Naive thymus-derived CD4-positive, alpha-beta T cell (primary cell): ENCODE measurements at regions of chr4 and their contacts with region 1.

Region 1: DNA sequence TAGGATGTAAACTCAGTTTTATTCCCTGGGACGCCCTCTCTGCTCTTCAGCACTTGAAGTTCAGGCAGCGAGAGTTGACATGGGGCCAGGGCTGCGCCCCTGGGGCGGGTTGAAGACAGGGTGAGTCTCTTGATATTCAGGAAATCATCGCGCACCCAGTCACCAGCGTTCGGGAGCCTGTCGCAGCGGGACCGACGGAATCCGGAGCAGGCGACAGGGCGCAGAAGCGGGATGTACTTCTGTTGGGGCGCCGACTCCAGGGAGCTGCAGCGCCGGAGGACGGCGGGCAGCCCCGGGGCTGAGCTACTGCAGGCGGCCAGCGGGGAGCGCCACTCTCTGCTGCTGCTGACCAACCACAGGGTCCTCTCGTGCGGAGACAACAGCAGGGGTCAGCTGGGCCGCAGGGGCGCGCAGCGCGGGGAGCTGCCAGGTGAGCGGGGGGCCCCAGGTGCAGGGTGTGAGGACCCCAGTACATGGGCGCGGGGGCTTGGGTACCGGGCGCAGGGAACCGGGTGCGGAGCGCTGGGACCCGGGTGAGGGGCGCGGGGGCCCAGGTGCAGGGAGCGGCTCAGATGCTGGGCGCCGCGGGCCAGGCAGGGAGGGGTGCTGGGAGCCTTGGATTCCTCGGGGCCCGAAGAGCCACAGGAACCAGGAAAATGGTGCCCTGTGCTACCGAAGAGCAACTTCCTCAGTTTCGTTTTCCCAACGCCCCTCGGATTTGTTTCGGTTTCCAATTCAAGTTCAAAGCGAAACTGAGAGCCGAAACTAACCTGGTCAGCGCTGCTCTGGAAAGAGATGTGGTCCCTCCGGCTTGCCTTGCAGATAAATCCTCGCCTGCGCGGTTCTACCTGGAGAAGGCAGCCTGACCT is at the start of gene HERC6:
- DNase-seq: peak; percentile 49 to 77 (median 70)
- ATAC-seq: peak; percentile 80
- H3K4me3 ChIP-seq: peak within 1 kb of the TSS; percentile 95
- H3K4me3 Mint-ChIP-seq: peak within 1 kb of the TSS; percentile 88 to 98 (median 94)
- H3K27ac ChIP-seq: peak within 1 kb of the TSS; percentile 92
- H3K27ac Mint-ChIP-seq: peak within 1 kb of the TSS; percentile 91 to 99 (median 94)
- H3K4me1 ChIP-seq: peaks cover 21 to 27% of the 10 kb centered on the region in 2 donors
- H3K4me1 Mint-ChIP-seq: peaks cover 24 to 60% (median 46%) of the 10 kb centered on the region in 7 donors
- H3K27me3 ChIP-seq: no peaks in the 10 kb centered on the region
- H3K27me3 Mint-ChIP-seq: no peaks in the 10 kb centered on the region
- total RNA-seq, gene HERC6: 12.6 to 43.5 (median 23.0) TPM

Region 2: GRCh38 chr4:87390891-87391575 is 987.9 kb before region 1 on chr4 and contains the start of gene HSD17B11:
- CTCF ChIA-PET with region 1: no interaction called
- POLR2A ChIA-PET with region 1: interaction called, 3 read pairs
- intact Hi-C with region 1: loop called in 1 of 2 experiments (anchors 10 kb)
- DNase-seq: peak; percentile 44 to 83 (median 79)
- ATAC-seq: peak; percentile 99
- H3K4me3 ChIP-seq: peak within 1 kb of the TSS; percentile 85
- H3K4me3 Mint-ChIP-seq: peak within 1 kb of the TSS; percentile 87 to 99 (median 97)
- H3K27ac ChIP-seq: peak within 1 kb of the TSS; percentile 82
- H3K27ac Mint-ChIP-seq: peak within 1 kb of the TSS; percentile 83 to 96 (median 94)
- H3K4me1 ChIP-seq: peaks cover 10 to 17% of the 10 kb centered on the region in 2 donors
- H3K4me1 Mint-ChIP-seq: peaks cover 32 to 66% (median 57%) of the 10 kb centered on the region in 7 donors
- H3K27me3 ChIP-seq: no peaks in the 10 kb centered on the region
- H3K27me3 Mint-ChIP-seq: peaks cover 0 to 14% (median 0%) of the 10 kb centered on the region in 5 donors
- total RNA-seq, gene HSD17B11: 34.3 to 74.4 (median 61.0) TPM

Region 3: GRCh38 chr4:88007304-88008121 is 371.4 kb before region 1 on chr4 and contains the start of gene PKD2:
- CTCF ChIA-PET with region 1: no interaction called
- POLR2A ChIA-PET with region 1: no interaction called
- intact Hi-C with region 1: loop called (anchors 5 to 10 kb)
- DNase-seq: peak; percentile 10 to 89 (median 54)
- ATAC-seq: peak; percentile 92
- H3K4me3 ChIP-seq: peak within 1 kb of the TSS; percentile 61
- H3K4me3 Mint-ChIP-seq: peak within 1 kb of the TSS; percentile 81 to 98 (median 94)
- H3K27ac ChIP-seq: peak within 1 kb of the TSS; percentile 56
- H3K27ac Mint-ChIP-seq: peak within 1 kb of the TSS; percentile 2 to 90 (median 58)
- H3K4me1 ChIP-seq: peaks cover 6 to 7% of the 10 kb centered on the region in 2 donors
- H3K4me1 Mint-ChIP-seq: peaks cover 19 to 42% (median 37%) of the 10 kb centered on the region in 7 donors
- H3K27me3 ChIP-seq: no peaks in the 10 kb centered on the region
- H3K27me3 Mint-ChIP-seq: peaks cover 0 to 31% (median 3%) of the 10 kb centered on the region in 5 donors
- total RNA-seq, gene PKD2: 4.9 to 16.1 (median 6.8) TPM

Region 4: DNA sequence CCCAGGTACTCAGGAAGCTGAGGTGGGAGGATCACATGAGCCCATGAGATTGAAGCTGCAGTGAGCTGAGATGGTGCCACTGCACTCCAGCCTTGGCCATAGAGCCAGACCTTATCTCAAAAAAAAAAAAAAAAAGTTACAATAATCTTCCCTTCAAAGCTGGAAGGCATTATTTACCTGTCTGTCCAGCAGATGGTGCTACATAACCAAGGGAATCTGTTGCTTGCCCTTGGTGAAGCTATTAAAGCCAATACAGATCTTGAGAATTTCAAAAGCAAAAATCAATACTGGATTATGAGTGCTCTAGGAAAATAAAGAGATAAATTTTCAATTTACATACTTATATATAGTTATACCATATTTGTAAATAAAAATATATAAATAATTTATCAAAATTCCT is 345.6 kb before region 1 on chr4:
- CTCF ChIA-PET with region 1: no interaction called
- POLR2A ChIA-PET with region 1: no interaction called
- intact Hi-C with region 1: loop called in 1 of 2 experiments (anchors 10 kb)
- DNase-seq: peak in 7 of 9 donors; percentile 19 to 57 (median 32)
- ATAC-seq: peak; percentile 75
- H3K4me3 ChIP-seq: no peak overlapping the region
- H3K4me3 Mint-ChIP-seq: no peak overlapping the region
- H3K27ac ChIP-seq: no peak overlapping the region
- H3K27ac Mint-ChIP-seq: no peak overlapping the region
- H3K4me1 ChIP-seq: no peaks in the 10 kb centered on the region
- H3K4me1 Mint-ChIP-seq: peaks cover 0 to 3% (median 0%) of the 10 kb centered on the region in 7 donors
- H3K27me3 ChIP-seq: no peaks in the 10 kb centered on the region
- H3K27me3 Mint-ChIP-seq: no peaks in the 10 kb centered on the region

Region 5: GRCh38 chr4:88320780-88321373 is 58.0 kb before region 1 on chr4:
- CTCF ChIA-PET with region 1: no interaction called
- POLR2A ChIA-PET with region 1: interaction called, 3 read pairs
- intact Hi-C with region 1: loop called (anchors 2 to 5 kb)
- DNase-seq: peak in 7 of 9 donors; percentile 9 to 39 (median 25)
- ATAC-seq: peak; percentile 91
- H3K4me3 ChIP-seq: peak overlapping the region; percentile 18
- H3K4me3 Mint-ChIP-seq: peak overlapping the region; percentile 69 to 90 (median 82)
- H3K27ac ChIP-seq: peak overlapping the region; percentile 63
- H3K27ac Mint-ChIP-seq: peak overlapping the region; percentile 88 to 98 (median 93)
- H3K4me1 ChIP-seq: peaks cover 7 to 13% of the 10 kb centered on the region in 2 donors
- H3K4me1 Mint-ChIP-seq: peaks cover 14 to 30% (median 23%) of the 10 kb centered on the region in 7 donors
- H3K27me3 ChIP-seq: no peaks in the 10 kb centered on the region
- H3K27me3 Mint-ChIP-seq: no peaks in the 10 kb centered on the region

Region 6: DNA sequence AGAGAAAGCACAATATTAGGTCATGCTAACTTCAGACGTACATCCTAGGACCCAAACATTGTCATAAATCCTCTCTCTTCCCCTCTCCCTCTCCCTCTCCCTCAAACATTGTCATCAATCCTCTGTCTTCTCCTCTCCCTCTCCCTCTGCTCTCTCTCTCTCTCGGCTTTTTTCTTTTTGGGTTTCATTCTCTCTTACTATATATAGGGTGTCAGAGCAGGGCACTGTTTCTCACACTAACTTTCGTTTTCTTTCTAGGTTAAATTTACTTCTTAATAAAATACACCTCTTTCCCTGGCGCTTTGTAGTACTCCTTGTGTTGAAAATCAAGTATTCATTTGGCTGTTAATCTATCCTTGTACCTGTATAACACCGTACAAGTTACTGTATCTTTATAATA is 40.9 kb after region 1 on chr4:
- CTCF ChIA-PET with region 1: no interaction called
- POLR2A ChIA-PET with region 1: no interaction called
- intact Hi-C with region 1: loop called in 1 of 2 experiments (anchors 5 kb)
- DNase-seq: no peak
- ATAC-seq: no peak
- H3K4me3 ChIP-seq: no peak overlapping the region
- H3K4me3 Mint-ChIP-seq: peak overlapping the region in 1 of 10 donors; percentile 13
- H3K27ac ChIP-seq: no peak overlapping the region
- H3K27ac Mint-ChIP-seq: peak overlapping the region in 2 of 9 donors; percentile 3 to 4
- H3K4me1 ChIP-seq: no peaks in the 10 kb centered on the region
- H3K4me1 Mint-ChIP-seq: peaks cover 0 to 5% (median 0%) of the 10 kb centered on the region in 7 donors
- H3K27me3 ChIP-seq: no peaks in the 10 kb centered on the region
- H3K27me3 Mint-ChIP-seq: no peaks in the 10 kb centered on the region

Region 7: DNA sequence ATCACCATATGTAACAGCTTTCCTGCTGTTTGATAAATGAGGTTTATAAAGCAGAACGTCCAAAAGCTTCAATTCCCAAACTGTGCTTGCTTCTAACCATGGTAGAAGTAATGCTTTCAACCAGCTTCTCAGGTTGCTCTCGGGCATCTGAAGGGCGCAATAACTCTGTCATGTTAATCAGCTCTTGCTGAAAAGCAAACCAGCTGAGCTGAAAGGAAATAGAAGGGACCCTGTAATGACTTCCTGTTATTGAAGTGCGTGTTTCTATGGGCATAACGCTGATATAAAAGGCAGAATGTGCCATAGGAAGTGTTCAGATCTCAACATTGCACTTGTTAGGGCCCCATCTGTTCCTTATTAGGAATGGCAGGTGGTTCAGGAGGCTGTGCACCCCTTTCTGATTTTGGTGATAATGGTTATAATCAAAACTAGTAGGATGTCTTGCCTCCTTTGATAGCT is 234.5 kb after region 1 on chr4:
- CTCF ChIA-PET with region 1: no interaction called
- POLR2A ChIA-PET with region 1: no interaction called
- intact Hi-C with region 1: loop called in 1 of 2 experiments (anchors 10 kb)
- DNase-seq: peak in 7 of 9 donors; percentile 71 to 91 (median 85)
- ATAC-seq: peak; percentile 94
- H3K4me3 ChIP-seq: peak overlapping the region; percentile 43
- H3K4me3 Mint-ChIP-seq: peak overlapping the region; percentile 64 to 92 (median 84)
- H3K27ac ChIP-seq: peak overlapping the region; percentile 77
- H3K27ac Mint-ChIP-seq: peak overlapping the region; percentile 91 to 99 (median 99)
- H3K4me1 ChIP-seq: peaks cover 28 to 55% of the 10 kb centered on the region in 2 donors
- H3K4me1 Mint-ChIP-seq: peaks cover 50 to 98% (median 86%) of the 10 kb centered on the region in 7 donors
- H3K27me3 ChIP-seq: no peaks in the 10 kb centered on the region
- H3K27me3 Mint-ChIP-seq: no peaks in the 10 kb centered on the region

Region 8: DNA sequence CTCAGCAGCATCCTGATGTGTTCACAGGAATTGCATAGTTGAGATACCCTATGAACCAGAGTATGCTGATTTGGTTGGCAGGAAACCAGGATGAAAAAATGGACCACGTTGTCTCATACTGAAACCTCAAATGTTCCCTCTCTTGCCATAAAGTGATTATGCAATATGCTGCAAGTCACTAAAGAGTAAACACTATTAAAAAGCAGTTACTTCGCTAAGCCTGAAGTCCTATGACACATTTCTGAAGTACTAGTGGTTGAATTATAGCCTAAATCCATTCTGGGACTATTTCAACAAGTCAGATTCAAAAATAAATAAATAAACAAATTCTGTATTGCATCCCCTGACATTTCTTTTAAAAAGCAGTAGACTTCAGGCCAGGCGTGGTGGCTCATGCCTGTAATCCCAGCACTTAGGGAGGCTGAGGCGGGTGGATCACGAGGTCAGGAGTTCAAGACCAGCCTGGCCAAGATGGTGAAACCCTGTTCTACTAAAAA is 424.7 kb after region 1 on chr4:
- CTCF ChIA-PET with region 1: no interaction called
- POLR2A ChIA-PET with region 1: no interaction called
- intact Hi-C with region 1: no loop called
- DNase-seq: no peak
- ATAC-seq: peak; percentile 42
- H3K4me3 ChIP-seq: no peak overlapping the region
- H3K4me3 Mint-ChIP-seq: no peak overlapping the region
- H3K27ac ChIP-seq: no peak overlapping the region
- H3K27ac Mint-ChIP-seq: peak overlapping the region in 1 of 9 donors; percentile 13
- H3K4me1 ChIP-seq: no peaks in the 10 kb centered on the region
- H3K4me1 Mint-ChIP-seq: peaks cover 0 to 72% (median 4%) of the 10 kb centered on the region in 7 donors
- H3K27me3 ChIP-seq: no peaks in the 10 kb centered on the region
- H3K27me3 Mint-ChIP-seq: peaks cover 0 to 23% (median 0%) of the 10 kb centered on the region in 5 donors